WTC11 (cell line): ENCODE measurements at regions of chr15 and their contacts with region 1.

Region 1: GRCh38 chr15:63752075-63752684 is 81.6 kb downstream of the HERC1 start:
- DNase-seq: no peak
- ATAC-seq: peak; percentile 55; the same call in 1 of the 2 replicates
- H3K4me3 Mint-ChIP-seq: no peak overlapping the region
- H3K27ac Mint-ChIP-seq: no peak overlapping the region
- H3K4me1 Mint-ChIP-seq: no peaks in the 10 kb centered on the region
- H3K27me3 Mint-ChIP-seq: no peaks in the 10 kb centered on the region
- CTCF ChIP-seq: peak; percentile 36

Region 2: DNA sequence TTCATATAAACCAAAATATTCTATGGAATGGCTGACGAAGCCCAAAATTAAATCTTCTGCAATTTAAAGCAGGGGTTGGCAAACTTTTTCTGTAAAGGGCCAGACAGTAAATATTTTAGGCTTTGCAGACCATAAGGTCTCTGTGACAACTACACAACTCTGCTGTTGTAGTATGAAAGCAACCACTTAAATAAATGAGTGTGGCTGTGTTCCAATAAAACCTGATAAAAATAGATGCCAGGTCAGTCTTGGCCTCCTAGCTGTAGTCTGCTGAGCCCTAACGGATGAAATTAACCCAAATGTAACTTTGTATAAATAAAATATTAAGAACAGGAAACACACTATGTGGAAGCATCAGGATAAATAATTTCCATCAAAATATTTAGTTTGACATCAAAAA is 50.8 kb before region 1 on chr15:
- CTCF ChIA-PET with region 1: no interaction called
- POLR2A ChIA-PET with region 1: no interaction called
- DNase-seq: no peak
- ATAC-seq: no peak
- H3K4me3 Mint-ChIP-seq: no peak overlapping the region
- H3K27ac Mint-ChIP-seq: no peak overlapping the region
- H3K4me1 Mint-ChIP-seq: peaks cover 3% of the 10 kb centered on the region; the same call in 1 of the 2 replicates
- H3K27me3 Mint-ChIP-seq: no peaks in the 10 kb centered on the region
- CTCF ChIP-seq: no peak

Region 3: DNA sequence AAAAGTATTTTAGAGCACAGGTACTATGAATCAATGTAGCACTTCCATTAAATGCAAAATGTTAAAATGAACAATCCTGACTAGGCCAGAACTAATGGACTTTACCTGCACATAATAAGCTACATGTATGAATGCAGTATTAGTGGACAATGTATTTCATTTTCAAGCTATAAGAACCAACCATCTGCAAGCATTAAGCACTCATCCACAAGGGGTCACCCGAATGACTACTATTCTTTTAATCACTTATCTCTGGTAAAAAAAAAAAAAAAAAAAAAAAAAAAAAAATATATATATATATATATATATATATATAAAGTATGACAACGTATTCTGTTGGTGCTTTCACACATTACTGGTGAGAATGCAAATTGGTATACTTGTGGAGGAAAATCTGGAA is 74.3 kb after region 1 on chr15:
- CTCF ChIA-PET with region 1: interaction called, 10 read pairs
- POLR2A ChIA-PET with region 1: no interaction called
- DNase-seq: no peak
- ATAC-seq: no peak
- H3K4me3 Mint-ChIP-seq: no peak overlapping the region
- H3K27ac Mint-ChIP-seq: no peak overlapping the region
- H3K4me1 Mint-ChIP-seq: peaks cover 5% of the 10 kb centered on the region
- H3K27me3 Mint-ChIP-seq: no peaks in the 10 kb centered on the region
- CTCF ChIP-seq: no peak

Region 4: DNA sequence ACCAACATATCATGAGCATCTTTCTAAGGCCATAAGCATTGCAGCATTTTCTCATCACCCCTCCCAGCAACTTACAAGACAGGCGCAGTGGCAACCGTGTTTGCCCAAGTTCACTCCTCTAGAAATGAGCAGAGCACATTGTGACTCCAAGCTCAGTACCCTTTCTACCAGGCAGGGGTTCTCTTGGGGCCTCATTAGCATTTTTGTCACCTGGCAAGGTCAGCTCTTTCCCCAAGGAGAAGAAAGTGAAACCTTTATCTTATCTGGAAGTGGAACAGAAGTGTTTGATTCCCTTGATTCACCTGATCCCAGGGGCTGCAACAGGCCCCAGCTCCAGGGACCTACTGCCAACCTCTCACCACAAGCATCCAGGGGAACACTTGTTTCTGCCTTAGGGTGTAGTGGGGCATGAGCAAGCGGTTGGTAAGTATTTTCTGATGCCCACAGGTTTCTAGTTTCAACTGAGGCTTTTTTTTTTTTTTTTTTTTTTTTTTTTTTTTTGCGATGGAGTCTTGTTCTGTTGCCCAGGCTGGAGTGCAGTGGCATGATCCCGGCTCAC is 125.6 kb after region 1 on chr15:
- CTCF ChIA-PET with region 1: interaction called, 11 read pairs
- POLR2A ChIA-PET with region 1: no interaction called
- DNase-seq: no peak
- ATAC-seq: no peak
- H3K4me3 Mint-ChIP-seq: no peak overlapping the region
- H3K27ac Mint-ChIP-seq: no peak overlapping the region
- H3K4me1 Mint-ChIP-seq: peaks cover 21% of the 10 kb centered on the region
- H3K27me3 Mint-ChIP-seq: no peaks in the 10 kb centered on the region
- CTCF ChIP-seq: no peak

Region 5: DNA sequence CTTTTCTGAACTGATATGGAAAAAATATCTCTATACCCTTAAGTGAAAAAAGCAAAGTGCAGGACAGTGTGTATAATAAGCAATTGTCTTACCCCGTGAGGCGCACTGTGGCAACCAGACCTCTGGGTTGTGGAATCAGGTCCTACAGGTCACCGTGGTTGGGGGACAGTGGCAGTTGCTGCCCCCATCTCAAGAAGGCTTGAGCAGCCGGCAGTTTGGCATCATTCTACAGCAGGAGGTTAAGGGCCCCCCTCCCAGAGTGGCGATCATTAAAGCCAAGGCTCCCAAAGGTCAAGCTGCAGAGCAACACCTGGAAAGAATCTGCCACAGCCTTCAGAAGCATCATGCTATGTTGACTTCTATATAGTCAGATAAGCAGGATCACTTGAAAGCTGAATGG is 137.7 kb after region 1 on chr15:
- CTCF ChIA-PET with region 1: interaction called, 10 read pairs
- POLR2A ChIA-PET with region 1: no interaction called
- DNase-seq: no peak
- ATAC-seq: no peak
- H3K4me3 Mint-ChIP-seq: no peak overlapping the region
- H3K27ac Mint-ChIP-seq: no peak overlapping the region
- H3K4me1 Mint-ChIP-seq: no peaks in the 10 kb centered on the region
- H3K27me3 Mint-ChIP-seq: no peaks in the 10 kb centered on the region
- CTCF ChIP-seq: no peak

Region 6: DNA sequence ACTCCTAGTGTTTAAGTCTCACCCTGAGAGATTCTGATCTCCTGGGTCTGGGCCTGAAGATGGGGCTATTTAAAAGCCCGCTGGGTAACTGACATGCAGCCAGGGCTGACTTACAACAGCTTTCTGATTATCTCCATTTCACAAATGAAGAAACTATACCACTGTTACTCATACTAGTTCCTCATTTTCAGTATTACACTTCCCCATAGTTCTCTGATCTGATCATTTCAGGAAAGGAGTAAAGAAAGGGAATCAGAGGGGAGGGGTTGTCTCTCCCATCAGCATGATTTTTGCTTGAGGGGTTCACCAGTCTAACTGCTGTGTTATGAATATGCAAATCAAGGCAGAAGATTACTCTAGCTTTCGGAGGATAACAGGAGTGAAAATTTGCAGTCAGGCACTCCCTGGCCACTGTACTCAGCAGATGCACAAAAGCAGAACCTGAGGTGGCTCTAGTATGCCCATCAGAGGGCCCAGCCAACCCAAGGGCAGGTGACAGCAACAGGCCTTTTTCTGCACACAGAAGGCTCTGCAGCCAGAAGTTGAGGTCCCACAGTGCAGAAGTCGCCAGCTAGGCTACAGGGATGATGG is 234.7 kb after region 1 on chr15:
- CTCF ChIA-PET with region 1: interaction called, 18 read pairs
- POLR2A ChIA-PET with region 1: no interaction called
- DNase-seq: no peak
- ATAC-seq: no peak
- H3K4me3 Mint-ChIP-seq: no peak overlapping the region
- H3K27ac Mint-ChIP-seq: no peak overlapping the region
- H3K4me1 Mint-ChIP-seq: 0 out of 2 replicates have a peak, but pooled peaks cover 2% of the 10 kb centered on the region
- H3K27me3 Mint-ChIP-seq: no peaks in the 10 kb centered on the region; the same call in 1 of the 2 replicates
- CTCF ChIP-seq: no peak

Region 7: GRCh38 chr15:64046347-64047153 is 294.4 kb after region 1 on chr15 and contains the start of gene DAPK2:
- CTCF ChIA-PET with region 1: interaction called, 15 read pairs
- POLR2A ChIA-PET with region 1: no interaction called
- DNase-seq: peak; percentile 73
- ATAC-seq: peak; percentile 88
- H3K4me3 Mint-ChIP-seq: peak within 1 kb of the TSS; percentile 74
- H3K27ac Mint-ChIP-seq: no peak within 1 kb of the TSS
- H3K4me1 Mint-ChIP-seq: peaks cover 7% of the 10 kb centered on the region
- H3K27me3 Mint-ChIP-seq: peaks cover 51% of the 10 kb centered on the region
- CTCF ChIP-seq: peak; percentile 60
- total RNA-seq, gene DAPK2: 1.0 to 2.3 TPM (median 1.5 TPM) in 3 replicates